Activated CD4-positive, alpha-beta T cell treated with anti-CD3 and anti-CD28 coated beads for 36 hours (primary cell): ENCODE measurements at regions of chr17 and their contacts with region 1.

Region 1: GRCh38 chr17:6640536-6641373 is at the starts of genes KIAA0753 and TXNDC17:
- DNase-seq: peak; percentile 96
- ATAC-seq: peak; percentile 81
- H3K4me3 Mint-ChIP-seq: peak within 1 kb of the TSS; percentile 92
- H3K27ac Mint-ChIP-seq: peak within 1 kb of the TSS; percentile 92
- H3K4me1 Mint-ChIP-seq: peaks cover 59% of the 10 kb centered on the region
- H3K27me3 Mint-ChIP-seq: no peaks in the 10 kb centered on the region
- total RNA-seq, gene KIAA0753: 17.1 to 24.9 TPM
- total RNA-seq, gene TXNDC17: 52.4 to 122 TPM

Region 2: DNA sequence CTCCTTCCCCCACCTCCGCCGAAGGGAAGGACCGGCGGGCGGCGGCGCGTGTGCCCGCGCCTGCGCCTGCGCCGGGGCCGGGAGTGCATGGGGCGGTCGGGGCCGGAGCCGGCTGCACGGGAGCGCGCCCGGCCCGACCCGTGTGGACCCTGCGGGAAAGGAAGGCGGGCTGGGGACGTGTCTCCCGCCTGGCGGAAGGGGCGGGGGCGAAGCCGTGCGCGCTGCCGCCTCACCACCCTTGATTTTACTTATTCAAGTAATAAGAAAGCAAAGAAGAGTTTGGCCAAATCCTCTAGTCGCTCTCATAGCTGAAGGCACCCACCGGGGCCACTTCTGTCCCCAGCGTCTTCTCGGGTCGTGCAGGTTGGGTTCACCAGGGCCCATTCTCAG is 1691.8 kb before region 1 on chr17:
- CTCF ChIA-PET with region 1: no interaction called
- POLR2A ChIA-PET with region 1: no interaction called
- intact Hi-C with region 1: loop called in 1 of 2 experiments (anchors 5 kb)
- DNase-seq: peak; percentile 88
- ATAC-seq: peak; percentile 39
- H3K4me3 Mint-ChIP-seq: peak overlapping the region; percentile 99
- H3K27ac Mint-ChIP-seq: peak overlapping the region; percentile 100
- H3K4me1 Mint-ChIP-seq: peaks cover 34% of the 10 kb centered on the region
- H3K27me3 Mint-ChIP-seq: no peaks in the 10 kb centered on the region

Region 3: DNA sequence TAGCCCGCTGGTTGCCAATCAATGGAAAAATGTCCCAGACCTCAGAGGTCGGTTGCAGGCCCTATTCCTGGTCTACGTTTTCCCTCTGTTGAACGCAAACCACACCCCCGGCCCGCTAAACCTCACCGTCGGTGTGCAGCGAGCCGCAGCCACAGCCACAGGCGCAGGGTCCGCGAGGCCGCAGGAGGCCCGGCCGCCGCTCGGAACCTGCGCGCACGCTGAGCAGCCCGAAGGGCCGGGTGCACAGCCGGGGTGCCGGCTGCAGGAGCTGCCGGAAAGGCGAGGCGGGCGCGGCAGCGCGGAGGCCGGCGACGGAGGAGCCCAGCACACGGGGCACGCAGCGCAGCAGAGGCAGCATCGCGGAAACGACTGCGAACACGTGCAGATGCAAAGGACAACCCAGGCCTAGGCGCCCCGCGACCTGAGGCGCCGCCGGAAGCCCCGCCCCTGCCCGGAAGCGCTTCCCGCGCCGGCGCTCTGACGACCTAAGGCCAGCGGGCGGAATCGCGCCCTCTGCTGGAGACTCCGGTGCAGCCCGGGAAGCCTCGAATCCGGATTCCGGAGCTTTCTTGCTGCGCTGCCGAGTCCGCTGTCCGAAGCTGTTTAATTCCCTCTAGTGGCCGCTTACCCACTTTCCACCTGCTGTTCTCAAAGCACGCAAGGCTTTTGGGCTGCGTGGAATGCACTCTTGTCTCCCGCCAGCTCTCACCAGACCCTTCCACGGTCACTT is 1201.9 kb before region 1 on chr17 and contains the start of gene C1QBP:
- CTCF ChIA-PET with region 1: no interaction called
- POLR2A ChIA-PET with region 1: no interaction called
- intact Hi-C with region 1: loop called in 1 of 2 experiments (anchors 2 kb)
- DNase-seq: peak; percentile 96
- ATAC-seq: peak; percentile 92
- H3K4me3 Mint-ChIP-seq: peak within 1 kb of the TSS; percentile 89
- H3K27ac Mint-ChIP-seq: peak within 1 kb of the TSS; percentile 92
- H3K4me1 Mint-ChIP-seq: peaks cover 44% of the 10 kb centered on the region
- H3K27me3 Mint-ChIP-seq: no peaks in the 10 kb centered on the region
- total RNA-seq, gene C1QBP: 432 to 457 TPM

Region 4: DNA sequence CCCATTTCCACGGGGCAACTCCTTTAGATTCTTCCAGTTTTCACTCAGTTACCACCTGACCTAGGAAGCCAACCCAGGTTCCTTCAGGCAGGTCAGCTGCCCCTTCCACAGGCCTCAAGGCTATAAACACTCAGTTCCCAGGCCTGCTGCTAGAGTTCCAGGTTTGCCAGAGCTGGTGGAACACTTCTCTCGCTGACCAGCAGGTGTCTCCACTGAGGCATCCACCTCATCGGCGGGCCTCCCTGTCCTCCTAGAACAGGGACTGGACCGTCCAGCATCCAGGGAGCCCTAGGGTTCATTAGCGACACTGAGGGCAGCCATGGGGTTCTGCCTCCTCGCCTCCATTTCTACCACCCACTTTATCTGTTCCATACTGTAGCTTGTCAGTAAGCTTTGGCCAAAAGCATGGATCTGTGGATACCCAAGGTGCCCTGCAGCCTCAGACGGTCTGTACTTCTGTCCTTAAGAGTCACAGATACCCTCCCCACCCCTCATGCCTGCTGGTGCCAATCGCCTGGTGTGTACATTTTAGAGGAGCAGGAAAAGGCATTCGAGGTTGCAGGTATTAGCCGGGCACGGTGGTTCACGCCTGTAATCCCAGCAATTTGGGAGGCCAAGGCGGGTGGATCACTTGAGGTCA is 167.5 kb before region 1 on chr17:
- CTCF ChIA-PET with region 1: no interaction called
- POLR2A ChIA-PET with region 1: no interaction called
- intact Hi-C with region 1: loop called (anchors 2 to 10 kb)
- DNase-seq: peak; percentile 84
- ATAC-seq: peak; percentile 84
- H3K4me3 Mint-ChIP-seq: no peak overlapping the region
- H3K27ac Mint-ChIP-seq: no peak overlapping the region
- H3K4me1 Mint-ChIP-seq: no peaks in the 10 kb centered on the region
- H3K27me3 Mint-ChIP-seq: no peaks in the 10 kb centered on the region

Region 5: DNA sequence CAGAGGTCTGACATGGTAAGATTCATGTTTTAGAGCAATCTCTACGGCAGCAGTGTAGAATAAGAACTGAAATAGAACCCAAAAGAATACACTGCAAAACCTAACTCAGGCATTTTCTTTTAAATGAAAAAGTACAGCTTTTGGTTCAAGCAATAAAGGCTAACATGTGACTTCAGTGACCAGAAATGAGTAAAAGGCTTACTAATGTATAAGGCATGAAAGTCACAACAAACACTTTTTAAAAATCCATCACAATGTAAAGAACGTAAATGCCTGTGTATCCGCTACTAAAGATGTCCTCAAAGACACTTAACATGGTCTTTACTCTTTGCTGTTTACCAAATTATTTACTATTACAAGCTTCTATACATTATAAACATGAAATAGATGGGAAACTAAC is 16.8 kb before region 1 on chr17:
- CTCF ChIA-PET with region 1: no interaction called
- POLR2A ChIA-PET with region 1: no interaction called
- intact Hi-C with region 1: no loop called
- DNase-seq: no peak
- ATAC-seq: no peak
- H3K4me3 Mint-ChIP-seq: no peak overlapping the region
- H3K27ac Mint-ChIP-seq: no peak overlapping the region
- H3K4me1 Mint-ChIP-seq: no peaks in the 10 kb centered on the region
- H3K27me3 Mint-ChIP-seq: no peaks in the 10 kb centered on the region

Region 6: GRCh38 chr17:7214300-7215135 is 573.8 kb after region 1 on chr17:
- CTCF ChIA-PET with region 1: no interaction called
- POLR2A ChIA-PET with region 1: no interaction called
- intact Hi-C with region 1: loop called in 1 of 2 experiments (anchors 10 kb)
- DNase-seq: peak; percentile 100
- ATAC-seq: peak; percentile 82
- H3K4me3 Mint-ChIP-seq: peak overlapping the region; percentile 81
- H3K27ac Mint-ChIP-seq: peak overlapping the region; percentile 93
- H3K4me1 Mint-ChIP-seq: peaks cover 71% of the 10 kb centered on the region
- H3K27me3 Mint-ChIP-seq: peaks cover 7% of the 10 kb centered on the region